ENCODE measurements at regions of chr1 and their contacts with region 1.

Region 1: GRCh38 chr1:11037740-11038182 is 9.3 kb downstream of the MASP2 start:
- DNase-seq: peak; percentile 78
- H3K27ac ChIP-seq: no peak overlapping the region
- CTCF ChIP-seq: peak; percentile 97

Region 2: GRCh38 chr1:10888286-10888685 is 149.5 kb before region 1 on chr1:
- CTCF ChIA-PET with region 1: no interaction called
- POLR2A ChIA-PET with region 1: no interaction called
- DNase-seq: no peak
- H3K27ac ChIP-seq: no peak overlapping the region
- CTCF ChIP-seq: no peak

Region 3: GRCh38 chr1:11059166-11059989 is 21.6 kb after region 1 on chr1:
- CTCF ChIA-PET with region 1: interaction called, 22 read pairs
- POLR2A ChIA-PET with region 1: no interaction called
- DNase-seq: no peak
- H3K27ac ChIP-seq: peak overlapping the region; percentile 76
- CTCF ChIP-seq: no peak

Region 4: DNA sequence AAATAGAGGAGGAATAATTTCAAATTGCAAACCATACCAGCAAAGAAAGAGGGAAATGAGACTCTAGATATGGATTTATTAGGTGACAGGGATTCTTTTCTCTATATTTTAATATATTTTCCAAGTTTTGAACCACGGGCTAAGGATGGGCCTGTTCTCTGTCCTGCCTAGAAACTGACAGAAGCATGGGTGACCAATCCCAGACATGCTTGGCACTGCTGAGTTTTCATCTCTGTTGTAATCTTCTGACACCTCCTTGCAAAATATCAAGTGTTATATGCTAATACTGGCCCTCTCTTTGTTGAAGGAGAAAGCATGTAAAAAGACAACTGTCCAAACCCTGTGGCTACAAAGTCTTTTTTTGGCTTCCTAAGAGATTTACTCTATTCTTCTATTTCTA is 150.6 kb after region 1 on chr1:
- CTCF ChIA-PET with region 1: interaction called, 10 read pairs
- POLR2A ChIA-PET with region 1: no interaction called
- DNase-seq: no peak
- H3K27ac ChIP-seq: no peak overlapping the region
- CTCF ChIP-seq: no peak

Region 5: GRCh38 chr1:11645670-11646265 is 608.0 kb after region 1 on chr1:
- CTCF ChIA-PET with region 1: interaction called, 19 read pairs
- POLR2A ChIA-PET with region 1: no interaction called
- DNase-seq: peak; percentile 51
- H3K27ac ChIP-seq: no peak overlapping the region
- CTCF ChIP-seq: peak; percentile 75

Region 6: DNA sequence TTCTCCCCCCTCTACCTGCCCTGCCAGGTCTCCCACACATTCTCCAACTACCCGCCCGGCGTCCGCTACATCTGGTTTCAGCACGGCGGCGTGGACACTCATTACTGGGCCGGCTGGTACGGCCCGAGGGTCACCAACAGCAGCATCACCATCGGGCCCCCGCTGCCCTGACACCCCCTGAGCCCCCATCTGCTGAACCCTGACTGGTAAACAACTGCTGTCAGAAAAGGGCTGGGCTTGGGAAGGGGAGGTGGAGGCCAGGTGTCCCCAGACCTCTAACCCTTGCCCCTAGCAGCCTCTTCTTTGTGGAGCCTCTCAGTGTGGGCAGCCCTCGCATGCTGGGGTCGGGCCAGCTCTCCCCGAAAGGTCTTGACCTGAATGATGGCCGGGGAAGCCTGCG is 623.3 kb after region 1 on chr1:
- CTCF ChIA-PET with region 1: interaction called, 10 read pairs
- POLR2A ChIA-PET with region 1: no interaction called
- DNase-seq: no peak
- H3K27ac ChIP-seq: no peak overlapping the region
- CTCF ChIP-seq: no peak